Dorsolateral prefrontal cortex (tissue), 120 donors: ENCODE measurements at regions of chr4 and their contacts with region 1.

Region 1: GRCh38 chr4:83639849-83640493 is 104.1 kb downstream of the GPAT3 start:
- DNase-seq: peak in 3 of 10 donors; percentile 22 to 69 (median 58)
- H3K4me3 ChIP-seq: no peak overlapping the region
- H3K27ac ChIP-seq: no peak overlapping the region
- H3K27me3 ChIP-seq: peaks cover 0 to 10% (median 0%) of the 10 kb centered on the region in 45 donors
- CTCF ChIP-seq: peak; percentile 64 to 96 (median 88)

Region 2: DNA sequence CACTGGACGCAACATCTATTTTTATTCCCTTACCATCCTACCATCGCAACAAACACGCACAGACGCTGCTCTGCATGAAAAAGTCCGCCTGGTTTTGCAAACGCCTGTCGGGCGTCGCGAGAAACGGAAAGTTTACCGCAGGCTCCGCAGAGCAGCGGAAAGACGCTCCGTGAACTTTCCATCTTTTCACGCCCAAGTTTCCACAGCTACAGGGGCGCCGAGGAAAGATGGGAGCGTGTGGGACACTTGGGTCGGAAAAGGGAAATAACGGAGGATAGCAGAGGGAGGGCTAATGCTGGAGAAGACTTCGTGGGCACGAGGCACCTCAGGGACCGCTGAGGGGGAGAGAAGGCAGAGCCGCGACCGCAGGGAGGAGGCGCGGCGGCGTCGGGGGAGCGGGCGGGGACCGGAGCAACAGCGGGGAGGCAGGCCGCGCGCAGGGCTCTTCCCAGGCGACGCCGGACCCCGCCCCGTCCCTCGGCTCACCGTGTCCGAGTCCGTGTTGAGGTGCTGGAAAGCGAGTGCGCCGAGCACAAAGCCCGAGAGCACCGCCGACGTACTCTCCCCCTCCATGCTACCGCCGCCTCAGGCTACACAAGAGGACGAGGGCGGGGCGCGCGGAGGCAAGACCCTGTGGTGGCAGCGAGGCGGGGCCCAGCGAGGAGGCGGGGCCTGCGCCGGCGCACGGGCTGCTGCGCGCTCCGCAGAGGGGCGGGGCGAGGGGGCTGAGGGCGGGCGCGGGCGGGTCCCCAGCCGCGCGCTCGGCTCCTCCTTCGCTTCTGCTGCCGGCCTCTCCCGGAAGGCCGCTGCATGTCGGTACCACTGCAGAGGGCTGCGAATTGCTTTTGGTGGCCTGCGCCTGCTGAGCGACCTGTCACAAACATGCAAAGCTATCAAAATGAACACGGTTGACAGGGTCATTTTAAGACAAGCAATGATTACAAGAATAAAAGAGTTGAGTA is 155.2 kb before region 1 on chr4 and contains the start of gene ABRAXAS1:
- intact Hi-C with region 1: loop called in 1 of 2 experiments (anchors 5 kb)
- DNase-seq: peak; percentile 87 to 96 (median 93)
- H3K4me3 ChIP-seq: peak within 1 kb of the TSS; percentile 52 to 94 (median 84)
- H3K27ac ChIP-seq: peak within 1 kb of the TSS; percentile 54 to 95 (median 87)
- H3K27me3 ChIP-seq: no peaks in the 10 kb centered on the region
- CTCF ChIP-seq: peak in 24 of 56 donors; percentile 3 to 39 (median 23)
- total RNA-seq, gene ABRAXAS1: 1.8 to 9.7 (median 4.7) TPM

Region 3: GRCh38 chr4:83503974-83504373 is 136.0 kb before region 1 on chr4:
- intact Hi-C with region 1: loop called in 1 of 2 experiments (anchors 10 kb)
- DNase-seq: no peak
- H3K4me3 ChIP-seq: no peak overlapping the region
- H3K27ac ChIP-seq: no peak overlapping the region
- H3K27me3 ChIP-seq: no peaks in the 10 kb centered on the region
- CTCF ChIP-seq: no peak

Region 4: DNA sequence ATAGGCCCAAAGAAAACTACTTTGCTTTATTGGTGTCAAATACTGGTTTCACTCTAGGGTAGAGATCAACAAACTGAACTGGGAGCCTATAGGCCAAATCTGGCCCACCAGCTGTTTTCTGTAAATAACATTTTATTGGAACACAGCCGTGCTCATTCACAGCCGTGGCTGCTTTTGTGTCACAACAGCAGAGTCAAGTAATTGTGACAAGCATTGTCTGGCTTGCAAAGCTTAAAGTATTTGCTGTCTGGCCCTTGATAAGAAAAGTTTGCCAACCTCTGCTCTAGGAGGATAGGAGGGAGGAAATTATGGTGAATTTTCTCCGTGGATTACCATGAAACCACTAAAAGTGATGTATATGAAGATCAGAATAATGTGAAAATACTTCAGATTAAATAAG is 50.7 kb before region 1 on chr4:
- intact Hi-C with region 1: no loop called
- DNase-seq: no peak
- H3K4me3 ChIP-seq: no peak overlapping the region
- H3K27ac ChIP-seq: no peak overlapping the region
- H3K27me3 ChIP-seq: no peaks in the 10 kb centered on the region
- CTCF ChIP-seq: no peak

Region 5: DNA sequence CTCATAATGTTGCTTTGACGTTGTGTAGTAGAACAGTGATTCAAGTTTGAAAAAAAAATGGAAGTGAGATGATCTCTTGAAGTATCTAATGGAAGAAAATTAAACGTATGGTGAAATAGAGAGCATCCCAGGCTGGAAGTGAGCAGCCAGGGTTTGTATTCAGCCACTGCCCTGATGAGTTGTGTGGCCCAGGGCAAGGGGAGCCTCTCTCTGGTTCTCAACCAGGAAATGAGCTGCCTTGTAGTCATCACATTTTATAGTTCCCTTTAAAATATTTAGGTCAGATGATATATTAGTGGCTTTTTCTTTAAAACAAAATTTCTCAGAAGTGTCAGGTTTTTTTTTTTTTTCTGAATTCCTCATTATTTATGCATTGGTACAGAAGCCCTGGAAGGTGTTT is 46.2 kb after region 1 on chr4:
- intact Hi-C with region 1: no loop called
- DNase-seq: no peak
- H3K4me3 ChIP-seq: no peak overlapping the region
- H3K27ac ChIP-seq: no peak overlapping the region
- H3K27me3 ChIP-seq: peaks cover 0 to 9% (median 0%) of the 10 kb centered on the region in 45 donors
- CTCF ChIP-seq: no peak

Region 6: DNA sequence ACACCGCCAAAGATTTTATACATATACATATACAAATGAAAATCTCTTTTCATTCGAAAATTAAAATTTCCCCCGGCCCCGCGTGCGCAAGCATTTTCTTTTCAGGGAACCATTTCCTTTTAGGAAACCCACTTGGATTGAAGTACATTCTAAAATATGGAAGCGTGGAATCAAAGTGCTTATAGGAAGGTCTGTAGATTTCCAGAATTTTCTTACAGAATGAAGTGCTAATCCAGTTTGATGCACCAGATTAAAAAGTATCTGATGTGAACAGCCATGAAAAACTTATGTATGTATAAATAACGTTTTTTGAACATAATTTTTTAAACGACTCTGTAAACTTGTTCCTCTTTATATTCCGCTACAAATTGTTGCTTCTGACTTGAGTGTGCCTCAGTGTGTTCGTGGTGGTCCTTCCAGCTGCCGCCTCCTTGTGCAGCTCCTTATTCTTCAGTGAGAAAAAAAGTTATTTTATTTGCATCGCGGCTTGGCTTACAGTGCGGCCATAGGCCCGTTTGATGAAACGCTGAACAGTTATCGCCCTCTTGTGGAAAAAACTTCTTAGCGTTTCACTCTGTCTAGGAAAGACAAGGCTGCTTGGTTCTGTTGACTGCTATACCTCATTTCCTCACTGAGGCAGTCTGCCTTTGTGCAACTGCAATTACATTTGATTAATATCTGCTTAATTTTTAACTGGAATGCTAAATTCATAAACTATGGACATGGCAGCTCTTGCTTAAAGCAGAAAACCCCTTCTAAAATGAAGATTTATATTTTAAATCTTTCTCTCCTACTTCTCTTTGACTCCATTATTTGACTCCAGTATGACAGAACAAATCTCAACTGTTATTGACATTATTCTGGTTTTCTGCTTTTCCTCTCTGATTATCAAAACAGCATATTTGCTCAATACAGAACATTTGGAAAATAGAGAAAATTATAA is 863.8 kb after region 1 on chr4:
- intact Hi-C with region 1: loop called (anchors 10 kb)
- DNase-seq: no peak
- H3K4me3 ChIP-seq: no peak overlapping the region
- H3K27ac ChIP-seq: no peak overlapping the region
- H3K27me3 ChIP-seq: peaks cover 38 to 100% (median 98%) of the 10 kb centered on the region in 45 donors
- CTCF ChIP-seq: peak in 55 of 56 donors; percentile 24 to 84 (median 67)